ENCODE measurements at regions of chr11 and their contacts with region 1.

Region 1: DNA sequence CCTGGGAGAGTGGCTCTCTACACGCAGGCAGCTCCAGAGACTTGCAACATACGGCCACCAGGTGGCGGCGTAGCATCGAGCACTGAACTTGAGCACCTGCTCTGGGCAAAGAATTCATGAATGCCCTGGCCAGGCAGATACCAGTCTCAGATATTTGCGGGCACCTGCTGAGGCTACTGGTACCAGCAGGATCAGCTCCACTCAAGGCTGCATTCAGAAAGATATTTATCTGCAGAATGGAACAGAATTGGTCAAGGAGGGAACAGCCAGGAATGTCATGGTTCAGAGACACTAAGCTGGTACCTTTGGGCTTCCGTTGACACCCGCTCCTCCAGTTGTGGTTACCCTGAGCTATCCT is 10.8 kb upstream of the CCDC86 start:
- H3K4me3 ChIP-seq: no peak overlapping the region
- H3K27ac ChIP-seq: no peak overlapping the region
- H3K4me1 ChIP-seq: no peaks in the 10 kb centered on the region
- CTCF ChIP-seq: peak; percentile 73; the same call in 1 of the 2 replicates

Region 2: GRCh38 chr11:60775420-60775961 is 55.6 kb before region 1 on chr11:
- CTCF ChIA-PET with region 1: interaction called, 25 read pairs
- POLR2A ChIA-PET with region 1: no interaction called
- H3K4me3 ChIP-seq: no peak overlapping the region
- H3K27ac ChIP-seq: no peak overlapping the region
- H3K4me1 ChIP-seq: no peaks in the 10 kb centered on the region
- CTCF ChIP-seq: peak; percentile 86

Region 3: GRCh38 chr11:60887556-60887955 is 56.4 kb after region 1 on chr11:
- CTCF ChIA-PET with region 1: interaction called, 95 read pairs
- POLR2A ChIA-PET with region 1: interaction called, 6 read pairs
- H3K4me3 ChIP-seq: no peak overlapping the region
- H3K27ac ChIP-seq: no peak overlapping the region
- H3K4me1 ChIP-seq: no peaks in the 10 kb centered on the region
- CTCF ChIP-seq: 0 out of 2 replicates have a peak, but pooled peaks have one; percentile 8

Region 4: GRCh38 chr11:60906132-60906972 is 75.2 kb after region 1 on chr11 and contains the start of gene PRPF19:
- CTCF ChIA-PET with region 1: interaction called, 78 read pairs
- POLR2A ChIA-PET with region 1: interaction called, 4 read pairs
- H3K4me3 ChIP-seq: peak within 1 kb of the TSS; percentile 88
- H3K27ac ChIP-seq: peak within 1 kb of the TSS; percentile 84
- H3K4me1 ChIP-seq: no peaks in the 10 kb centered on the region; the same call in 1 of the 2 replicates
- CTCF ChIP-seq: 0 out of 2 replicates have a peak, but pooled peaks have one; percentile 18

Region 5: GRCh38 chr11:61173456-61173855 is 342.3 kb after region 1 on chr11:
- CTCF ChIA-PET with region 1: interaction called, 11 read pairs
- POLR2A ChIA-PET with region 1: no interaction called
- H3K4me3 ChIP-seq: no peak overlapping the region
- H3K27ac ChIP-seq: no peak overlapping the region
- H3K4me1 ChIP-seq: no peaks in the 10 kb centered on the region
- CTCF ChIP-seq: no peak

Region 6: GRCh38 chr11:61384271-61385242 is 553.4 kb after region 1 on chr11:
- CTCF ChIA-PET with region 1: interaction called, 10 read pairs
- POLR2A ChIA-PET with region 1: no interaction called
- H3K4me3 ChIP-seq: no peak overlapping the region
- H3K27ac ChIP-seq: no peak overlapping the region
- H3K4me1 ChIP-seq: no peaks in the 10 kb centered on the region
- CTCF ChIP-seq: no peak

Measured in HEK293 (cell line).